H1 (cell line): ENCODE measurements at regions of chr9 and their contacts with region 1.

Region 1: DNA sequence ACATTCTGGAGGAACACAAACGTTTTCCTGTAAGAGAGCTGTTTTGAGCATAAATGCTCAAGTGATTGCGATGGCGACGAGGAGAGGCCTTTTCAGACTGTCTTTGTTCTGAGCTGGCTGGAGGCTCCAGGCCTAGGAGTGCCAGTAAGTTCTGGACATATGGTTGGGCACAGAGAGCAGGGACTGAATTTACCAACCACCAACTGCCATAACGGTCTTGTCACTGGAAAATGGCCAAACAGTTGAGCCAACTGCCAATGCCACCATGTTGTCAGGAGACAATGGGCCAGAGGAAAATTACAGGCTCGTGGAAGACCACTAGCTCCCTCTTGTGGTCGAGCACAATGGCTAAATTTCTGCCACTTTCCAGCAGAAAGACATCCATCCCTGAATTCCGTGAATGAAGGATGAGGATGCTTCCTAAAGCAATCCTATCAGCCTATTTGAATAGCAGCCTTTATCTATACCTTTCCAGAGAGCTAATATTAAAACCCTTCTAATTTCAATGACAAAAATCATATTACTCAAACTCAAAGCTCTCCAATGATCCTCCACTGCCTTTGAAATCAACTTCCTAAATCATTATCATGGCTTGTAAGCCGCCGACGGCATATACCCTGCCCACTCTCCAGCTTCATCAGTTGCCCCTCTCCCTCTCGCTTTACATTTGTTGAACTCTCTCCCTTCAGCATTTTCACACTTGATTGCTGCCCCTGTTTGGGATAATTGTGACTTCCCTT is 66.9 kb upstream of the GLIS3 start:
- DNase-seq: peak; percentile 33 to 59
- H3K4me3 ChIP-seq: no peak overlapping the region
- H3K27ac ChIP-seq: no peak overlapping the region
- H3K4me1 ChIP-seq: 0 out of 7 replicates have a peak, but pooled peaks cover 0 to 1% (median 0%) of the 10 kb centered on the region in 4 experiments
- H3K27me3 ChIP-seq: no peaks in the 10 kb centered on the region
- CTCF ChIP-seq: peak; percentile 58 to 91 (median 72)
- EP300 ChIP-seq: no peak
- POLR2A ChIP-seq: no peak
- RAD21 ChIP-seq: peak; percentile 89 to 91

Region 2: DNA sequence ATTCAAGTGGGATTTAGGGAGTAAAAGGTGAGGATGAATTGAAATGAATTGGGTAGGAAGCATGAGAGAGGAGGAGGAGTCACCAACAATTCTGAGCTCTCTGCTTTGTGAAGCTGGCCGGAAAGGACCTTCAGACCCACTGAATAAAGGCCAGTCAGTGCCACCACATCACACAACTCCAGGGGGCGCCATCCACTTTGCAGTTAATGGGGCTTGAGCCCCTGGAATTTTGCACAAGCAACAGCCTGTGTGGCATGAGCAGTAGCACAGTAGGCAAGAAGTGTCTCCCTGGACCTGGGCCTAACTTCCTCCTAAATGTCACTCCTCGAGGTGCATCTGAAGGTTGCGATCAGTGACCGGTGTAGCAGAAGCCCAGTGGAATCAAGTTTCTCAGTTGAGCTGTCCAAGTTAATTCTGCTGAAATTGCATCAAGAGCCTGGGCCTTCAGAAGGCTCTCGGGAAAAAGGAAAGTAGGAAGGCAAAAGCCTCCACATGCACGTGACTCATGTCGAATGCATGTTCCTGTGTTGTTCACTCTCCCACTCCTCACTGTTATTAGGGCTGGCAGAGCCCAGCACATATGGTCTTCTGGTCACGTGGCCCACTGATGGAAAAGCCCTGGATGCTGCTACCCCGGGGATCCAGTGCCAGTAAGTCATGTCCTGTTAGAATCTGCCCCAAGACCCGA is 39.1 kb before region 1 on chr9:
- CTCF ChIA-PET with region 1: interaction called, 29 read pairs
- POLR2A ChIA-PET with region 1: no interaction called
- DNase-seq: peak in 1 of 2 experiments; percentile 52
- H3K4me3 ChIP-seq: no peak overlapping the region
- H3K27ac ChIP-seq: no peak overlapping the region
- H3K4me1 ChIP-seq: no peaks in the 10 kb centered on the region
- H3K27me3 ChIP-seq: no peaks in the 10 kb centered on the region
- CTCF ChIP-seq: peak; percentile 30 to 42 (median 32)
- EP300 ChIP-seq: no peak
- POLR2A ChIP-seq: no peak
- RAD21 ChIP-seq: peak; percentile 36 to 55; a peak in 3 of 4 replicates

Region 3: DNA sequence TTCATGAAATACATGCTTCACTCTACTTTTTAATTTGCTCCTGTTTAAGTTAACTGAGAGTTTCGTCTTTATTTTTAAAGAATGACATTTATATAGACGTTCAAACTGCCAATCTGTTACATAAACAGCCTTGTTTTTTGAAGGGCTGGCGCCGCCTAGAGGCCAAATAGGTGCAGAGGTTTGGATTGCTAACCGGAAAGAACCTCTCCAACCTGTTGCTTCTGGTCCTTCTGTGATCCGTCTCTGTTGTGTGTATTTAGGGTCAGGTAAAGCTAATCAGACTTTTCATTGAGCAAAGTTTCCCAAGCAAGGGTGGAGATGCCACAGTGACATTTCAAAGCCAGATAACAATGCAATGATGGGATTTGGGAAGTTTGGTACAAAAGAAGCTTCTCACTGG is 27.4 kb before region 1 on chr9:
- CTCF ChIA-PET with region 1: interaction called, 24 read pairs
- POLR2A ChIA-PET with region 1: no interaction called
- DNase-seq: peak; percentile 38 to 78
- H3K4me3 ChIP-seq: no peak overlapping the region
- H3K27ac ChIP-seq: no peak overlapping the region
- H3K4me1 ChIP-seq: no peaks in the 10 kb centered on the region
- H3K27me3 ChIP-seq: no peaks in the 10 kb centered on the region; a peak in 1 of 7 replicates
- CTCF ChIP-seq: peak; percentile 56 to 89 (median 78)
- EP300 ChIP-seq: no peak
- POLR2A ChIP-seq: no peak
- RAD21 ChIP-seq: peak; percentile 73 to 80

Region 4: GRCh38 chr9:4346131-4346530 is 20.6 kb before region 1 on chr9:
- CTCF ChIA-PET with region 1: interaction called, 24 read pairs
- POLR2A ChIA-PET with region 1: no interaction called
- DNase-seq: no peak
- H3K4me3 ChIP-seq: no peak overlapping the region
- H3K27ac ChIP-seq: no peak overlapping the region
- H3K4me1 ChIP-seq: peaks cover 0 to 2% (median 0%) of the 10 kb centered on the region in 4 experiments; a peak in 1 of 7 replicates
- H3K27me3 ChIP-seq: no peaks in the 10 kb centered on the region
- CTCF ChIP-seq: no peak
- EP300 ChIP-seq: no peak
- POLR2A ChIP-seq: no peak
- RAD21 ChIP-seq: no peak

Region 5: DNA sequence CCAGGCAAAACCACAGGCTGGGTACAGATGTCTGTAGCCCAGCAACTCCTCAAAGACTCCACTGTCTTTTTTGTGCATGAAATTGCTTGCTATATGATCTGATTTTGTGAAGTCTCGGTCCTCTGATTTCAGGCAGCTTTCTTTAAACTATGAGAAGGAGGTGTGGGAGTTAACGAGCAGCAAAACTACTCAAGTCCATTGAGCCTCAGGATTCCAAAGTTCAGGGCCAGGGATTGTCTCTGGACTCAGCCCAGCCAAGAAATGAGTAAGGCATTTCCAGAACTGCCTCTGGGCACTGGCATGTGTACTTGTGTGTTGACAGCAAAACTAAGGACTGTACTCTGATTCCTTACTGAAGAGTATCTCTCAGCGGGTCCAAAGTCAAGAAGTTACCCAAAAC is 13.5 kb before region 1 on chr9:
- CTCF ChIA-PET with region 1: interaction called, 21 read pairs
- POLR2A ChIA-PET with region 1: no interaction called
- DNase-seq: no peak
- H3K4me3 ChIP-seq: no peak overlapping the region
- H3K27ac ChIP-seq: no peak overlapping the region
- H3K4me1 ChIP-seq: no peaks in the 10 kb centered on the region
- H3K27me3 ChIP-seq: no peaks in the 10 kb centered on the region
- CTCF ChIP-seq: no peak
- EP300 ChIP-seq: no peak
- POLR2A ChIP-seq: no peak
- RAD21 ChIP-seq: no peak